Naive thymus-derived CD8-positive, alpha-beta T cell (primary cell): ENCODE measurements at regions of chr2 and their contacts with region 1.

Region 1: GRCh38 chr2:216221811-216222210 is 112.7 kb downstream of the XRCC5 start:
- DNase-seq: no peak
- ATAC-seq: no peak
- H3K4me3 Mint-ChIP-seq: no peak overlapping the region
- H3K27ac Mint-ChIP-seq: peak overlapping the region in 2 of 10 donors; percentile 64 to 68
- H3K4me1 Mint-ChIP-seq: peaks cover 18 to 43% (median 28%) of the 10 kb centered on the region in 4 donors
- H3K27me3 Mint-ChIP-seq: no peaks in the 10 kb centered on the region

Region 2: GRCh38 chr2:216163518-216163917 is 58.3 kb before region 1 on chr2:
- POLR2A ChIA-PET with region 1: no interaction called
- DNase-seq: no peak
- ATAC-seq: no peak
- H3K4me3 Mint-ChIP-seq: no peak overlapping the region
- H3K27ac Mint-ChIP-seq: peak overlapping the region in 6 of 10 donors; percentile 13 to 73 (median 22)
- H3K4me1 Mint-ChIP-seq: peaks cover 14 to 40% (median 26%) of the 10 kb centered on the region in 4 donors
- H3K27me3 Mint-ChIP-seq: no peaks in the 10 kb centered on the region

Region 3: GRCh38 chr2:216195565-216196029 is 26.2 kb before region 1 on chr2:
- POLR2A ChIA-PET with region 1: interaction called, 10 read pairs
- DNase-seq: no peak
- ATAC-seq: no peak
- H3K4me3 Mint-ChIP-seq: no peak overlapping the region
- H3K27ac Mint-ChIP-seq: peak overlapping the region in 5 of 10 donors; percentile 23 to 73 (median 48)
- H3K4me1 Mint-ChIP-seq: peaks cover 2 to 18% (median 7%) of the 10 kb centered on the region in 4 donors
- H3K27me3 Mint-ChIP-seq: no peaks in the 10 kb centered on the region